Activated CD4-positive, alpha-beta memory T cell treated with anti-CD3 and anti-CD28 coated beads, Interleukin-2, amount 10 ng/mL, durations not matched to agents 7 days and 5 days (primary cell): ENCODE measurements at regions of chr19 and their contacts with region 1.

Region 1: GRCh38 chr19:19663256-19664038 is at the start of gene ATP13A1:
- DNase-seq: peak; percentile 95
- H3K4me3 Mint-ChIP-seq: peak within 1 kb of the TSS; percentile 81
- H3K27ac Mint-ChIP-seq: peak within 1 kb of the TSS; percentile 98
- H3K4me1 Mint-ChIP-seq: peaks cover 40% of the 10 kb centered on the region
- H3K27me3 Mint-ChIP-seq: no peaks in the 10 kb centered on the region
- total RNA-seq, gene ATP13A1: 102 to 107 TPM

Region 2: DNA sequence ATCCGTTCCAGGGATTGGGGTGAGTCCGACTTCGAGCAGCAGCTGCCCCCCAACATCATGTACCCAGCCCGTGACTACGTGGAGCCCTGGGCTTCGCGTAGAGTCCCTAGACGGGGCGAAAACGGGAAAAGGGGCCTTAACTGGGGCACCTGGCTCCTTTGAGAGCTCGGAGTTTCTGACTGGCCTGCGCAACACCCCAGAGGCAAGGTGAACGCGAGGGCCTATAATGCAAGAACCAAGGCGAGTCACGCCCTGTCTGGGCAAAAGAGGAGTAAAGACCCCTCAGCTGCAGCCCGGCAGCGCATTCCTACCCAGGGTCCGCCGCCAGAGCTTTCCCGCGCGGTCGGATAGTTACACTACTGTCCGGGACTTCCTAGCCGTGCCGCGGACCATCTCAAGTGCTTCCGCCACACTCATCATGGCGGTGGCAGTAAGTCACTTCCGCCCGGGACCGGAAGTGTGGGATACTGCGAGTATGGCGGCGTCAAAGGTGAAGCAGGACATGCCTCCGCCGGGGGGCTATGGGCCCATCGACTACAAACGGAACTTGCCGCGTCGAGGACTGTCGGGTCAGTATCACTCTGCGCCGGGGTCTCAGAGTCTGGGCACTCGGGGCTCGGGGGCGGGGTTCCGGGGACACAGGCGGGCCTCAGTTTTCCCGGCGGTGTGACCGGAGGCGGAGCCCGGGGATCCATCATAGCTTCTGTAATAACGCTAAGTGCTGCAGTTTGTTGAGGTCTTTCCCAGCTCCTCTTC is 147.5 kb before region 1 on chr19 and contains the start of gene NDUFA13:
- CTCF ChIA-PET with region 1: interaction called, 3 read pairs
- POLR2A ChIA-PET with region 1: interaction called, 29 read pairs
- DNase-seq: peak; percentile 95
- H3K4me3 Mint-ChIP-seq: peak within 1 kb of the TSS; percentile 93
- H3K27ac Mint-ChIP-seq: peak within 1 kb of the TSS; percentile 94
- H3K4me1 Mint-ChIP-seq: peaks cover 33% of the 10 kb centered on the region
- H3K27me3 Mint-ChIP-seq: no peaks in the 10 kb centered on the region
- total RNA-seq, gene NDUFA13: 371 to 388 TPM

Region 3: GRCh38 chr19:19597809-19598306 is 65.6 kb before region 1 on chr19:
- CTCF ChIA-PET with region 1: interaction called, 3 read pairs
- POLR2A ChIA-PET with region 1: interaction called, 40 read pairs
- DNase-seq: peak; percentile 73
- H3K4me3 Mint-ChIP-seq: peak overlapping the region; percentile 69
- H3K27ac Mint-ChIP-seq: peak overlapping the region; percentile 95
- H3K4me1 Mint-ChIP-seq: peaks cover 81% of the 10 kb centered on the region
- H3K27me3 Mint-ChIP-seq: no peaks in the 10 kb centered on the region

Region 4: DNA sequence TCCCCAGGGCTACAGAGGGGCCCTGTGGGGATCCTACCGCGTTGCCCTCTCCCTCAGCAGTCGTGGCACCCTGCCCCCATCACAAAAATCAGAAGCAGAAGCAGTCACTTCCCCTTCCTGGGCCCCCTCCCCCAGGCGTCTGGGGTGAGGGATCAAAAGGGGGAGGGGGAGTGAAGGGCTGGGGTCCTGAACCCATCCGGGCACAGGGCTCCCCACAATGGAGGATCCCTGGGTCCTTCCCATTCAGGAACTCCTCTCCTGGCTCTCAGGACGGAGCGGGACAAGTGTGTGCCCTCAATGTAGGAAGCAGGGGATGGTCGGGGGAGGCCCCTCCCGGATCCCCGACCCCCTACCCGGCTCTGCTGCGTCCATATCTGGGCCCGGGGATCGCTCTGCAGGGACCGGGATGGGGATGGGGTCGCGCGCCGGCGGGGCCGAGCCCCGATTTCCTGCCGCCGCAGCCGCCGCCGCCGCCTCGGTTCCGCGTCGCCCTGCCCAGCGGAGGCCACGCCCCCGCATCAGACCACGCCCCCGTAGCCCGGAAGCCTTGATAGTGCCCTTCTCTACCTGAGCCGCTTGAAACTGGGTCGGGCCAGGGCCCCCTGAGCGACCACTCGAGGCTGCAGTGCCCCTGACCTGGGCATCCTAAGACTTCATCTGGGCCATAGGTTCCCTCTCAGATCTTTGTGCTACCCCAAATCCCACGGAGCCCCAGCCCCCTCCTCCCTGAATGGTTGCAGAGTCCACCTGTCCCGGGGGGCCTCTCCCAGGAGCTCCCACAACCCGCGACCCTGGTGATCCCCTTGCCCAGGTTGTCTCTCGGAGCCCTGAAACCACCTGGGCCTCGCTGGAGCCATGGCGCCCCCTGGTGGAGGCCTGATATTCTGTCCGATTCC is 20.0 kb before region 1 on chr19 and contains the start of gene GMIP:
- CTCF ChIA-PET with region 1: interaction called, 13 read pairs
- POLR2A ChIA-PET with region 1: interaction called, 8 read pairs
- DNase-seq: peak; percentile 90
- H3K4me3 Mint-ChIP-seq: peak within 1 kb of the TSS; percentile 98
- H3K27ac Mint-ChIP-seq: peak within 1 kb of the TSS; percentile 96
- H3K4me1 Mint-ChIP-seq: peaks cover 16% of the 10 kb centered on the region
- H3K27me3 Mint-ChIP-seq: no peaks in the 10 kb centered on the region
- total RNA-seq, gene GMIP: 111 to 112 TPM

Region 5: GRCh38 chr19:19686580-19686979 is 23.1 kb after region 1 on chr19:
- CTCF ChIA-PET with region 1: interaction called, 3 read pairs
- POLR2A ChIA-PET with region 1: interaction called, 27 read pairs
- DNase-seq: no peak
- H3K4me3 Mint-ChIP-seq: no peak overlapping the region
- H3K27ac Mint-ChIP-seq: no peak overlapping the region
- H3K4me1 Mint-ChIP-seq: no peaks in the 10 kb centered on the region
- H3K27me3 Mint-ChIP-seq: no peaks in the 10 kb centered on the region

Region 6: DNA sequence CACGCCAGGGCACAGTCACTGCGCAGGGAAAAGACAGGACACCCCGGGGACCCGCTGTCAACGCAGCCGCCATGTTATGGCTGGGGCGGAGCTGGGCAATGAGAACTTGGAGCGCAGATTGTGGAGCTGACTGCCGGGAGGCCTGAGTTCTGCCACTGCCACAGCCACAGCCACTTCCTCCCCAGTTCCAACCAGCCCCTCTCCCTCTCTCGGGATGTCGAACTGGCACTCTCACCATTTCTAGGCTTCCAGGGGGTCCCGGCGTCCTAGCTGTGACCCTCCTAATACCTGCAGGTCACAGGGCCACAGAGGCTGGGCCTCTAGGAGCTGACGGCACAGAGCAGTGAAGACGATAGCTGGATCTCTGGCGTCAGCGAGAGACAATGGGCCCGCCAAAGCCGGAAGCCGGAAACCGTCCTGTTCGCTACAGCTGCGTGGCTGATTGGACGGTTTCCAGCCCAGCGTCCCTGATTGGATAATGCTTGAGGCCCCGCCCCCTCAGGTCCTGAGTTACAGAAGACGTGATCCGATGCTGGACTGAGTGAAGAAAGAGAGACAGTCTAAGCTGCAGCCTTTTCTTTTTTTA is 158.0 kb after region 1 on chr19 and contains the start of gene ZNF506:
- CTCF ChIA-PET with region 1: interaction called, 3 read pairs
- POLR2A ChIA-PET with region 1: interaction called, 51 read pairs
- DNase-seq: peak; percentile 96
- H3K4me3 Mint-ChIP-seq: peak within 1 kb of the TSS; percentile 99
- H3K27ac Mint-ChIP-seq: peak within 1 kb of the TSS; percentile 99
- H3K4me1 Mint-ChIP-seq: peaks cover 29% of the 10 kb centered on the region
- H3K27me3 Mint-ChIP-seq: no peaks in the 10 kb centered on the region
- total RNA-seq, gene ZNF506: 24.6 to 25.5 TPM

Region 7: DNA sequence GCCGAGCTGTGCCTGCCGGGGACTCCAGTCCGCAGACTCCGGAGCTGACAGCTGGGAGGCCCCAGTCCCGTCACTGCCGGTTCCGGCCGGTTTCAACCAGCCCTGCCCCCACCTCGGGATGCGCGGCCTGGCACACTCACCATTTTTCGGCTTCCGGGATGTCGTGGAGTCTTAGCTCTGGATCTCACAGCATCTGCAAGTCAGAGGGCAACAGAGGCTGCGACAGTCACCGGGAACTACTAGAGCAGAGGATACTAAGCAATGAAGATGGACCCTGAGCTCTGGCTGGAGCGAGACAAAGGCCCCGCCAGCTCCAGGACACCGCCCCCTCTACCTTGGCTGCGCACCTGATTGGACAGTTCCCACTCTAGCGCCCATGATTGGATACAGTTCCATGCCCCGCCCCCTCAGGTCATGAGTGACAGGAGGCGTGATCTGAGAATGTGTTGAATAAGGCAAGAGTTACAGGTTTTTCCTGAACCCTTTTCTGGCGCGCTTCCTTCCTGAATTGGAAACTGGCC is 375.8 kb after region 1 on chr19 and contains the start of gene ZNF682:
- CTCF ChIA-PET with region 1: no interaction called
- POLR2A ChIA-PET with region 1: interaction called, 13 read pairs
- DNase-seq: peak; percentile 92
- H3K4me3 Mint-ChIP-seq: peak within 1 kb of the TSS; percentile 92
- H3K27ac Mint-ChIP-seq: peak within 1 kb of the TSS; percentile 89
- H3K4me1 Mint-ChIP-seq: peaks cover 20% of the 10 kb centered on the region
- H3K27me3 Mint-ChIP-seq: no peaks in the 10 kb centered on the region
- total RNA-seq, gene ZNF682: 4.8 to 5.5 TPM